A673 (cell line): ENCODE measurements at regions of chr9 and their contacts with region 1.

Region 1: GRCh38 chr9:34546834-34547827 is 24.3 kb upstream of the ENHO start:
- DNase-seq: peak; percentile 83
- H3K4me3 ChIP-seq: no peak overlapping the region
- H3K27ac ChIP-seq: no peak overlapping the region
- H3K4me1 ChIP-seq: no peaks in the 10 kb centered on the region
- H3K27me3 ChIP-seq: no peaks in the 10 kb centered on the region
- CTCF ChIP-seq: peak; percentile 78

Region 2: GRCh38 chr9:33272061-33272460 is 1275.1 kb before region 1 on chr9:
- CTCF ChIA-PET with region 1: no interaction called
- POLR2A ChIA-PET with region 1: no interaction called
- intact Hi-C with region 1: no loop called
- DNase-seq: no peak
- H3K4me3 ChIP-seq: no peak overlapping the region
- H3K27ac ChIP-seq: no peak overlapping the region
- H3K4me1 ChIP-seq: no peaks in the 10 kb centered on the region
- H3K27me3 ChIP-seq: no peaks in the 10 kb centered on the region
- CTCF ChIP-seq: no peak

Region 3: GRCh38 chr9:34328987-34329832 is 217.9 kb before region 1 on chr9 and contains the starts of genes KIF24 and NUDT2:
- CTCF ChIA-PET with region 1: no interaction called
- POLR2A ChIA-PET with region 1: no interaction called
- intact Hi-C with region 1: loop called (anchors 5 kb)
- DNase-seq: peak; percentile 100
- H3K4me3 ChIP-seq: peak within 1 kb of the TSS; percentile 87
- H3K27ac ChIP-seq: peak within 1 kb of the TSS; percentile 91
- H3K4me1 ChIP-seq: peaks cover 30% of the 10 kb centered on the region
- H3K27me3 ChIP-seq: no peaks in the 10 kb centered on the region
- CTCF ChIP-seq: no peak
- total RNA-seq, gene KIF24: 10.6 and 11.6 TPM in 2 replicates
- total RNA-seq, gene NUDT2: 19.1 and 25.3 TPM in 2 replicates

Region 4: DNA sequence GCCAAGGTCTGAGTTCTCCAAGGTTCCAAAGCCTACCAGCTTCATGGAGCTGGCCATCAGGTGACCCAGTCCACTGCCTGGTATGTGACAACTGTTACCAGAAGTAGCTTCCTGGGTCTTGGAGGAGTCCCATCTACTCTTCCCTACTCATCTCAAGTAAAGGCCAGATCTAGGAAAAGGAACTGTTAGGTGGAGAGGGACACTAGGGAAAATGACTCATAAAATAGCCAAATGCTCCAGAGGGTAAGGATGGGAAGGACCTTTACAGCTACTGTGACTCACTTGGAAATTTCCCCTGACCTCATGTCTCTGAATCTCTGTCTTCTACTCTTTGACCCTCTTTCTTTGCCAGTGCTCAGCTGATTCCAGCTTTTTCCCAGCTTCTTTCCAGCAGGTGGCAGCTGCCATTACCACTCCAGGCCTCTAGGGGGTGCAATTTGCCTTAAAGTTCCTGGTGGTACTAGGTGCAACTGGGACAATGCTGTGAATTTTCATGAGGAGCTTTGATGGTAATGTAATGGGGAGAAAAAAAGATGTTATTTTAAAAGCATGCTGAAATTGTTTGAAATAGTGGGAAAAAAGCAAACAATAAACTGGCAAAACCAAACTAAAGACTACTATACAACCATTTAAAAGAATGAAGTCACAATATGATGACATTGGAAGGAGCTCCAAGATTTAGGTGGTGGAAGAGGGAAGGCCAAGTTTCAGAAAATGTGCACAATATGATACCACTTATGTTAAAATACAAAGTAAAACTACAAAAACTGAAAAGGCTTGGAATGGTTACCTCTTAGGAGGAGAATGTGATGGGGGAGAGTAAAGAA is 143.4 kb before region 1 on chr9:
- CTCF ChIA-PET with region 1: interaction called, 16 read pairs
- POLR2A ChIA-PET with region 1: no interaction called
- intact Hi-C with region 1: loop called (anchors 5 kb)
- DNase-seq: peak; percentile 75
- H3K4me3 ChIP-seq: no peak overlapping the region
- H3K27ac ChIP-seq: no peak overlapping the region
- H3K4me1 ChIP-seq: no peaks in the 10 kb centered on the region
- H3K27me3 ChIP-seq: no peaks in the 10 kb centered on the region
- CTCF ChIP-seq: peak; percentile 95

Region 5: GRCh38 chr9:34437006-34437925 is 109.9 kb before region 1 on chr9:
- CTCF ChIA-PET with region 1: no interaction called
- POLR2A ChIA-PET with region 1: no interaction called
- intact Hi-C with region 1: loop called (anchors 2 kb)
- DNase-seq: peak; percentile 81
- H3K4me3 ChIP-seq: no peak overlapping the region
- H3K27ac ChIP-seq: no peak overlapping the region
- H3K4me1 ChIP-seq: peaks cover 25% of the 10 kb centered on the region
- H3K27me3 ChIP-seq: no peaks in the 10 kb centered on the region
- CTCF ChIP-seq: peak; percentile 88